Caco-2 (cell line): ENCODE measurements at regions of chr3 and their contacts with region 1.

Region 1: GRCh38 chr3:46378426-46378942 is 7.7 kb downstream of the CCR5 start:
- DNase-seq: peak; percentile 66 to 76
- H3K4me3 ChIP-seq: no peak overlapping the region
- H3K4me3 Mint-ChIP-seq: no peak overlapping the region
- H3K27ac Mint-ChIP-seq: no peak overlapping the region
- H3K4me1 ChIP-seq: no peaks in the 10 kb centered on the region
- H3K4me1 Mint-ChIP-seq: peaks cover 3% of the 10 kb centered on the region
- H3K27me3 ChIP-seq: no peaks in the 10 kb centered on the region
- H3K27me3 Mint-ChIP-seq: peaks cover 6% of the 10 kb centered on the region
- CTCF ChIP-seq: peak; percentile 56 to 83

Region 2: DNA sequence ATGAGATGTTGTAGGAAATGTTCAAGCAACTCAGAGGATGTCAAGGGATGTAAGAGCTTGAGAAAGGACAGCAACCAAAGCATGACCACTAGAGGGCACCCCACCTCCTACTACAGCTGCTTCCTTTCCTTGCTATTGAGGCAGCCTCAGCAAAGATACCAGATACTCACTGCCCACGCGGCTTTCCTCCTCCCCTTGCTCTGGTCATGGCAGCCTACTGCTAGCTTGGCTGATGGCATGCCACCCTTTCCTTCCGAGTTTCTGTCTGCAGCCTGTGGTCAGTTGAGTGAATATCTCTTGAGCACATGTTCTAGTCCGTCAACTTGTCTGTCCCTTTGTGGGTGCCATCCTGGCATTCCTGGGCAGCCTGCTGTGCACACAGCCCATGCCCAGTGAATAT is 439.6 kb before region 1 on chr3:
- CTCF ChIA-PET with region 1: no interaction called
- POLR2A ChIA-PET with region 1: no interaction called
- intact Hi-C with region 1: loop called (anchors 1 kb)
- DNase-seq: peak; percentile 78
- H3K4me3 ChIP-seq: no peak overlapping the region
- H3K4me3 Mint-ChIP-seq: no peak overlapping the region
- H3K27ac Mint-ChIP-seq: no peak overlapping the region
- H3K4me1 ChIP-seq: no peaks in the 10 kb centered on the region
- H3K4me1 Mint-ChIP-seq: peaks cover 14% of the 10 kb centered on the region
- H3K27me3 ChIP-seq: no peaks in the 10 kb centered on the region
- H3K27me3 Mint-ChIP-seq: no peaks in the 10 kb centered on the region
- CTCF ChIP-seq: peak; percentile 71 to 88

Region 3: GRCh38 chr3:46276502-46277099 is 101.9 kb before region 1 on chr3:
- CTCF ChIA-PET with region 1: interaction called, 5 read pairs
- POLR2A ChIA-PET with region 1: no interaction called
- intact Hi-C with region 1: loop called (anchors 5 kb)
- DNase-seq: peak; percentile 38 to 50
- H3K4me3 ChIP-seq: no peak overlapping the region
- H3K4me3 Mint-ChIP-seq: no peak overlapping the region
- H3K27ac Mint-ChIP-seq: no peak overlapping the region
- H3K4me1 ChIP-seq: no peaks in the 10 kb centered on the region
- H3K4me1 Mint-ChIP-seq: no peaks in the 10 kb centered on the region
- H3K27me3 ChIP-seq: no peaks in the 10 kb centered on the region
- H3K27me3 Mint-ChIP-seq: no peaks in the 10 kb centered on the region
- CTCF ChIP-seq: peak; percentile 44 to 55